H1 (cell line): ENCODE measurements at regions of chr20 and their contacts with region 1.

Region 1: GRCh38 chr20:36439040-36439730 is 102.1 kb upstream of the MYL9 start:
- DNase-seq: peak; percentile 60 to 96
- H3K4me3 ChIP-seq: no peak overlapping the region
- H3K27ac ChIP-seq: no peak overlapping the region
- H3K4me1 ChIP-seq: peaks cover 0 to 6% (median 2%) of the 10 kb centered on the region in 4 experiments; a peak in 3 of 7 replicates
- H3K27me3 ChIP-seq: peaks cover 0 to 10% (median 5%) of the 10 kb centered on the region in 4 experiments; a peak in 3 of 7 replicates
- CTCF ChIP-seq: peak; percentile 95 to 98 (median 96)
- EP300 ChIP-seq: no peak
- POLR2A ChIP-seq: no peak
- RAD21 ChIP-seq: peak; percentile 97

Region 2: DNA sequence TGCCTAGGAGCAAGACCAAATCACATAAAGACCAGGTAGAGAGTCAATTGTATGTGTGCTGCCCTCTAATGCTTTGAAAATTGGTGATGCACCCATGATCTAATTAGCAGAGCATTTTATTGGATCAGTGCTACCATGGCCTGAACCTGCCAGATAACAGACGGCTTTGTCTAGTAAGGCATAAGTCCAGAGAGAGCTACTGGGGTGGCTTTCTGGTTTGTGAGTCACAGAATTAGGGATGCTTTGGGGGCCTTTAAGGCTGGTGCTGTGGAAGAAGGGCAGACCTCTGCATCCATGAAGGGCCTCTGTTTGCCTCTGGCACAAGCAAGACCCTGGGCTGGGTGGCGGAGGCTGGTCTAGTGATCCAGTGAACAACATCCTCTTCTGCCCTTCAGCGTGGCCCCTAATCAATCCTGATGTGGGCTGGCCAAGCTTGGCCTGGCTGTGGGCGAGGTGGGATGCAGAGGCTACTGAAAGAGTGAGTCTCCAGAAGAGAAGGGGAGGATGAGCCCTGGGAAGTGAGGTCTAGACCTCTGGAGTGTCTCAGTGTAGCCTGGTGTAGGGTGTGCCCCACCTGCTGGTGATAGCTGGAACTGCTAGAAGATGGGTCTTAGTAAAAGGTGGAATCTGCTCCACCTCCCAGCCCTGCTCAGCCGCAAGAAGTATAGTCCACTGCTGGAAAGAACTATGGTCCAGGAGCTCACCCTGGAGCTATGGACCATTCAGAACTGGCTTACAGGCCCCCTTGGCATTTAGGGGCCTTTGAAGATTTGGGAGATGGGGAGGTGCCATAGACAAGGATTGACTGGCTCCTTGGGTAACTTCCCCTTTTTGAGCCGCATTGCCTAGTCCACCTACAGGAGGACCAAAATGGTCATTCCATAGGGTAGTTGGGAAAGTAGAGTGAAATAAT is 239.6 kb before region 1 on chr20:
- CTCF ChIA-PET with region 1: interaction called, 21 read pairs
- POLR2A ChIA-PET with region 1: no interaction called
- DNase-seq: peak; percentile 53 to 96
- H3K4me3 ChIP-seq: no peak overlapping the region
- H3K27ac ChIP-seq: no peak overlapping the region
- H3K4me1 ChIP-seq: no peaks in the 10 kb centered on the region
- H3K27me3 ChIP-seq: no peaks in the 10 kb centered on the region
- CTCF ChIP-seq: peak; percentile 84 to 97 (median 85)
- EP300 ChIP-seq: no peak
- POLR2A ChIP-seq: no peak
- RAD21 ChIP-seq: peak; percentile 85 to 86

Region 3: DNA sequence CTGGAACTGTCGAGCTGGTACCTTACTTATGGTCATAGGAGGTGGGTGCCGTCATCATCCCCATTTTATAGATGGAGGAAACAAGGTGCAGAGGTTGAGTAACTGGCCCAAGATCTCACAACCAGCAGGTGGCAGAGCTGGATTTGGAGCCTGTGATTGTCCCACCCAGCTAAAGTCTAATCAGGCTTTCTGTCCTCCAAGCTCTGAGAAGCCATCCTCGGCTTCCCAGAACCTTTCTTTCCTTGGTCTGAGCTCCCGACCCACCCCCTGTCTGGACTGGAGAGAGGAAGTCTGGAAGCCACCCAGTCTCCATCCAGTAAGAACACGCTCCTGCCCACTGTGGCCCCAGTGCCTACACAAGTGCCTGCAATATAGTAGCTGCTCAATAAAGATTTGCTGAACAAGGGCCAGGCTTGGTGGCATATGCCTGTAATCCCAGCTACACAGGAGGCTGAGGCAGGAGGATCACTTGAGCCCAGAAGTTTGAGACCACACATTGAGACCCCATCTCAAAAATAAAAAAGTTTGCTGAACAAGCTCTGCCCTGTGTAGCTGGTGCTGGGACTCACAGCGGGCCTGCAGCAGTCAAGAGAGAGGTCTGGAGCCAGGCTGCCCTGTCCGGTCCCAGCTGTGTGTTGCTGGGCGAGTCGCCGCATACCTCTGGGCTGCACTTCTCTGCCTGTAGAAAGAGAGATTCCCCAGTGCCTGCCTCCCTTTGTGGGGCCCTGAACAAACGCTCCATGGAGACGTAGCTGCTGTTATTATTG is 165.6 kb before region 1 on chr20:
- CTCF ChIA-PET with region 1: interaction called, 54 read pairs
- POLR2A ChIA-PET with region 1: interaction called, 5 read pairs
- DNase-seq: peak in 1 of 2 experiments; percentile 41
- H3K4me3 ChIP-seq: no peak overlapping the region
- H3K27ac ChIP-seq: no peak overlapping the region
- H3K4me1 ChIP-seq: no peaks in the 10 kb centered on the region; a peak in 2 of 7 replicates
- H3K27me3 ChIP-seq: no peaks in the 10 kb centered on the region
- CTCF ChIP-seq: peak; percentile 33 to 43 (median 36); a peak in 3 of 4 replicates
- EP300 ChIP-seq: no peak
- POLR2A ChIP-seq: no peak
- RAD21 ChIP-seq: peak; percentile 49 to 59

Region 4: DNA sequence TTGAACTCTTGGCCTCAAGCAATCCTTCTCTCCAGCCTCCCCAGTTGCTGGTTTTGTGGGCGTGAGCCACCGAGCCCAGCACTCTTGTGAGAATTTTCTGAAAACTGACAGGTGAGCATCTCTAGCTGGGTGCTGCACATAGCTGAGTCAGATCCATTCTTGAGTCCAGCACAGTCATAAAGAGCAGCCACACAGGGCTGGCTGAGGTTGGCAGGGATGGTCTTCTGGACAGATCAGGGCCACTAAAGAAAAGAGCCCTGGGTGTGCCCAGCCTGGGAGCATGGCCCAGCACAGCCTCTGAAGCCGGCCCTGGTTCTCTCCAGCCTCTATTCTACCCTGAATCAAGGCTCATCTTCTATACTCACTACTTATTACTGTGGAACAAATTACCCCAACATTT is 121.5 kb before region 1 on chr20:
- CTCF ChIA-PET with region 1: interaction called, 10 read pairs
- POLR2A ChIA-PET with region 1: no interaction called
- DNase-seq: no peak
- H3K4me3 ChIP-seq: no peak overlapping the region
- H3K27ac ChIP-seq: no peak overlapping the region
- H3K4me1 ChIP-seq: peaks cover 0 to 5% (median 2%) of the 10 kb centered on the region in 4 experiments; a peak in 3 of 7 replicates
- H3K27me3 ChIP-seq: no peaks in the 10 kb centered on the region
- CTCF ChIP-seq: no peak
- EP300 ChIP-seq: no peak
- POLR2A ChIP-seq: no peak
- RAD21 ChIP-seq: no peak

Region 5: DNA sequence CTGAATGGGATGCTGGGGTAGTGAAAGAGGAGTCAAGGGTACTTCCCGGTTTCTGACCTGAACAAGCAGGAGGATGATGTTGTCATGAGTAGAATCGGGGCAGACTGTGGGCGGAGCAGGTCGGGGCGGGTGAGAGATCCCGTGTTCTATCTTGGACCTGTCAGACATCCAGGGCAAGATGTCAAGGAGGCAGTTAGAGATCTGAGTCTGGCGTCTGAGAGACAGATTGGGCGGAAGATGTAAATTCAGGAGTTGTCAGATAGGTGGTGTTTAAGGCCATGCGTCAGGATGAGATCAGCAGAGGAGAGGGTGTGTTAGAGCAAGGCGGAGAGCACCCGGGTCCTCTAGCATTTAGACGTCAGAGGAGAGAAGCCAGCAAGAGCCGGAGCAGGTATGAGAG is 17.5 kb before region 1 on chr20:
- CTCF ChIA-PET with region 1: interaction called, 25 read pairs
- POLR2A ChIA-PET with region 1: no interaction called
- DNase-seq: no peak
- H3K4me3 ChIP-seq: no peak overlapping the region
- H3K27ac ChIP-seq: no peak overlapping the region
- H3K4me1 ChIP-seq: no peaks in the 10 kb centered on the region
- H3K27me3 ChIP-seq: no peaks in the 10 kb centered on the region
- CTCF ChIP-seq: no peak
- EP300 ChIP-seq: no peak
- POLR2A ChIP-seq: no peak
- RAD21 ChIP-seq: no peak

Region 6: DNA sequence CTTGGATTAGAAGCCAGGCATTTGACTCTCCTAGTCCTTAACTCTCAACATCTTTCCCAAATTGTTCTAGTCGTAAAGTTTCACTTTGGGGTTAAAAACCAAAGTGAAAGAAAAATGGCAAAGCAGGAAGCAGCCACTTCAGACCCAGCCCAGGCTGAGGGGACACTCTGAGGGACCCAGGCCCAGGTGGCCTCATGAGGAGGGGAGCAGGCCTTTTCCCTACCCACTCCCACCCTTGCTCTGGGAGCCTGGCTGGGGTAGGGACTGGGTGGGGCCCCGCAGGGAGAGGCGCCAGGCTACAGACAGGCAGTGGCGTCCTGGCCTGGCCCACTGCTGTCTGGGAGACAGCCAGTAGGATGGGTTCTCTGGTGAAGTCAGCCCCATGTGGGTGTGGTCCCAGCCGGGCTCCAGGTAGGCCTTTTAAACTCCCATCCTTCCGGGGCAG is 33.5 kb after region 1 on chr20:
- CTCF ChIA-PET with region 1: interaction called, 12 read pairs
- POLR2A ChIA-PET with region 1: no interaction called
- DNase-seq: peak in 1 of 2 experiments; percentile 73
- H3K4me3 ChIP-seq: no peak overlapping the region
- H3K27ac ChIP-seq: no peak overlapping the region; the same call in 1 of the 2 replicates
- H3K4me1 ChIP-seq: peaks cover 0 to 6% (median 4%) of the 10 kb centered on the region in 4 experiments; a peak in 4 of 7 replicates
- H3K27me3 ChIP-seq: no peaks in the 10 kb centered on the region
- CTCF ChIP-seq: no peak
- EP300 ChIP-seq: no peak
- POLR2A ChIP-seq: no peak
- RAD21 ChIP-seq: no peak